Sigmoid colon (tissue), 7 donors: ENCODE measurements at regions of chr1 and their contacts with region 1.

Region 1: GRCh38 chr1:26472901-26473845 is 933 bp downstream of the HMGN2 start:
- DNase-seq: peak; percentile 99
- H3K4me3 ChIP-seq: peak overlapping the region; percentile 91 to 99 (median 98)
- H3K27ac ChIP-seq: peak overlapping the region; percentile 100
- H3K4me1 ChIP-seq: peaks cover 0 to 33% (median 26%) of the 10 kb centered on the region in 4 donors
- H3K27me3 ChIP-seq: no peaks in the 10 kb centered on the region
- CTCF ChIP-seq: no peak
- EP300 ChIP-seq: peak in 1 of 4 donors; percentile 79
- POLR2A ChIP-seq: peak in 1 of 2 donors; percentile 27

Region 2: DNA sequence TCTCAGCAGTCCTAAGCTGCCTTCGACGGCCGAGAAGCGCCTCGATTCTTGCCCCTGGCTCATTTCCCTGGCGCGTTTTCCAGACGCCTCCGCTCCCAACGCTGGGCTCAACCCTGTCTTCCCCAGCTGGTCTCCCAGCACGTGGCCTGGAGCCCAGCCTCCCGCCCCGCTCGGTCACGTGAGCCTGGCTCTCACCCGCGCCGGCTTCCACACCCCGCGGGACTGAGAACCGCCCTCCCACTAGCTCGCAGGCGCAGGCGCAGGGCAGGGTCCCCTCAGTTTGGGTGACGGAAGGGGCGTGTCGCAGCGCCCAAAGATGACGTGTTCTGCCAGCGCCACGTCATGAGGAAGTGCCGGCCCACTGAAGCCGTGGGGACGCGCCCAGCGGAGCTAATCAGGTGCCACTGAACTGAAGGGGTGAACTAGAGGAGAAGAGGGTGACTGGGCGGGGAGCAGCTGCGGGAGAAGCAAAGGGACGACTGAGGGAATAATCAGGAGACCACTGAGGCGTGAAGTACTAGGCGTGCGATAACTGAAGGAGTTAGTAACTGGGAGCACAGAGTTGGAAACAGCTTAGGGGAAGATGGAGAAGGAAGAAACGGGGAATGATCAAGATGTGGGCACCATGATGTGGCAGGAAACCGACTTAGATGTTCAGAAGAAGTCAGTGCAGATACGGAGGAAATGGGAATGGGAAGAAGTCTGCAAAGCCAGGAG is 41.0 kb before region 1 on chr1 and contains the start of gene DHDDS:
- intact Hi-C with region 1: loop called (anchors 2 kb)
- DNase-seq: peak; percentile 99
- H3K4me3 ChIP-seq: peak within 1 kb of the TSS; percentile 45 to 67 (median 63)
- H3K27ac ChIP-seq: peak within 1 kb of the TSS; percentile 76 to 84 (median 81)
- H3K4me1 ChIP-seq: peaks cover 0 to 29% (median 20%) of the 10 kb centered on the region in 4 donors
- H3K27me3 ChIP-seq: no peaks in the 10 kb centered on the region
- CTCF ChIP-seq: no peak
- EP300 ChIP-seq: peak in 1 of 4 donors; percentile 87
- POLR2A ChIP-seq: peak; percentile 83 to 94
- total RNA-seq, gene DHDDS: 16.6 to 33.5 (median 24.7) TPM

Region 3: DNA sequence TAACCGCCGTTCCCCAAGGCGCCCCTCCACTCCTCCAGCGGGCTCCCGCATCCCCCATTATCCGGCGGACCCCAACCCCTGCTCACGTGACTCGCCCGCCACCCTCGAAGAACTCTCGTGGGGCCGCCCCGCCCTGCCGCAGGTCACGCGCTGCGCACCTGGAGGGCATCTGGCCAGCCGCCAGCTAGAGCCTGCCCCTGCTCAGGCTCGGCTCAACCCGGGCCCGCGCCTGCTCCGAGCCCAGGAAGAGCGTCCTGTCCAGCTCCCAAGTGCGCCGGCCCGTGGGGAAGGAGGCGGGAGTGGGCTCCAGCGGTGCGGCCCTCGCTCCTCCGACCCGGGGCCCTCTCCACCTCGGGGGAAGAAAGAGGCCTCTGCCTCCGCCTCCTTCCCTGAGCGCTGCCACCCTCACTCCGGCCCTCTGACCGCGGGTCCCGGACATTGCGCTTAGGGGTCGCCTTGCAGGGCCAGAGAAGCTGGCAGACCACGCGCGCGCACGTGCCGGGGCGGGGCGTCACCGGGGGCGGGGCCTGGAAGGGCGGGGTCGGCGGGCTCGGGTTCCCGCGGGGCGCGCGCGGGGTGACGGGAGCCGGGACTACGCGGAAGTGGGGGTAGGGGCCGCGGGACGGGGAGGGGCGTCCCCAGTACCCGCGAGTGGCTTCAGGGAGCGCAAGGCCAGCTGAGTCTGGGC is 27.5 kb after region 1 on chr1:
- intact Hi-C with region 1: loop called (anchors 2 kb)
- DNase-seq: peak; percentile 92
- H3K4me3 ChIP-seq: peak overlapping the region; percentile 60 to 68 (median 63)
- H3K27ac ChIP-seq: peak overlapping the region; percentile 85 to 96 (median 89)
- H3K4me1 ChIP-seq: peaks cover 3 to 17% (median 9%) of the 10 kb centered on the region in 4 donors
- H3K27me3 ChIP-seq: no peaks in the 10 kb centered on the region
- CTCF ChIP-seq: no peak
- EP300 ChIP-seq: no peak
- POLR2A ChIP-seq: no peak

Region 4: GRCh38 chr1:26645734-26646133 is 172.6 kb after region 1 on chr1:
- intact Hi-C with region 1: no loop called
- DNase-seq: no peak
- H3K4me3 ChIP-seq: no peak overlapping the region
- H3K27ac ChIP-seq: no peak overlapping the region
- H3K4me1 ChIP-seq: no peaks in the 10 kb centered on the region
- H3K27me3 ChIP-seq: no peaks in the 10 kb centered on the region
- CTCF ChIP-seq: no peak
- EP300 ChIP-seq: no peak
- POLR2A ChIP-seq: no peak